ENCODE measurements at regions of chr19 and their contacts with region 1.

Region 1: DNA sequence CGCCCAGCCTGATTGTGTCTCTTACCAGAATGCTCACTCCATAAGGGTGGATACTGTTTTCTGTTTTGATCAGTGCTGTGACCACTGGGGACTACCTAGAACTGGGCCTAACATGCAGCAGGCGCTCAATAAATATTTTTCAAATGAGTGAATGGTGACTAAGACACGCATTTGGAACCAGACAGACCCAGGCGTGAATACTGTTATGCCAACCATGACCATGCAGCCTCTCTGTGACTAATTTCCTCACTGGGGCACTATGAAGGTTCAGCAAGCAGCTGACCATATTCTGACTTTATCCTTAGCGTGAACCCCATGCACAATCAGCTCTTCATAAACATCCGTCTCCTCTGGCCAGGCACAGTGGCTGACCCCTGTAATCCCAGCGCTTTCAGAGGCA is 13.0 kb upstream of the SPC24 start:
- DNase-seq: peak; percentile 95
- H3K4me3 ChIP-seq: no peak overlapping the region
- H3K27me3 ChIP-seq: no peaks in the 10 kb centered on the region
- CTCF ChIP-seq: no peak

Region 2: GRCh38 chr19:11256189-11256588 is 87.6 kb after region 1 on chr19:
- CTCF ChIA-PET with region 1: no interaction called
- POLR2A ChIA-PET with region 1: interaction called, 12 read pairs
- DNase-seq: no peak
- H3K4me3 ChIP-seq: no peak overlapping the region
- H3K27me3 ChIP-seq: no peaks in the 10 kb centered on the region
- CTCF ChIP-seq: no peak

Measured in BJ (cell line).